ENCODE measurements at regions of chr22 and their contacts with region 1.

Region 1: DNA sequence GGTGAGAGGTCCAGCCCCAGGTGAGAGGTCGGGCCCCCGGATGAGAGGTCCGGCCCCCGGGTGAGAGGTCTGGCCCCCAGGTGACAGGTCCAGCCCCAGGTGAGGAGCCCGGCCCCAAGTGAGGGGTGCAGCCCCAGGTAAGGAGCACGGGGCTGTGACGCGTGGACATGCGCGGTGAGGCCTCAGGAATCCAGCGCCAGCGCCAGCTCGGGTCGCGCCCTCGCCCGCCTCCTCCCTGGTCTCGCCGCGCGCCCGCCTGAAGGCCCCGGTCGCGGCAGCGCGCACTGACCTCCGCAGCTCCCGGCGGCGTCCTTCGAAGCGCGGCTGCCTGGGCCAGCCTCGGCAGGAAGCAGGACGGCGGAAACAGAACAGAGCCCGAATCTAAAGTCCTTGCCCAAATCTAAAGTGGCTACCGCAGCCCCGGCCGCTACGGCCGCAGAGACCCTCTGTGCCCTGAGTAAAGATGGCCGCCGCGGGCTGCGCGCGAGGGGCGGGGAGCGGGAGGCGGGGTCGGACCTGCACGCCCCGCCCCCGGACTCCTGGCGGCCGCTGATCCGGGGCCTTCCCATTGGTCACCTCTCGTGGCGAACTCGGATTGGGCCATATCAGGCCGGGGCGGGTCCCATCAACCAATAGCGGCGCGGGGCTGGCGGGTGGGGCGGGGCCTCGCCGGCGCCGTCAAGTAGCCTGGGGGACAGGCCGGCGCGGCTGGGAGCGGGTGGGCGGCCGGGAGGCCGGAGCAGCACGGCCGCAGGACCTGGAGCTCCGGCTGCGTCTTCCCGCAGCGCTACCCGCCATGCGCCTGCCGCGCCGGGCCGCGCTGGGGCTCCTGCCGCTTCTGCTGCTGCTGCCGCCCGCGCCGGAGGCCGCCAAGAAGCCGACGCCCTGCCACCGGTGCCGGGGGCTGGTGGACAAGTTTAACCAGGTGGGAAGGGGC is at the starts of genes ALG12 and CRELD2:
- DNase-seq: peak; percentile 96 to 98
- H3K4me3 ChIP-seq: peak within 1 kb of the TSS; percentile 77
- H3K4me3 Mint-ChIP-seq: peak within 1 kb of the TSS; percentile 71
- H3K27ac Mint-ChIP-seq: peak within 1 kb of the TSS; percentile 71
- H3K4me1 ChIP-seq: peaks cover 10% of the 10 kb centered on the region; the same call in 1 of the 2 replicates
- H3K4me1 Mint-ChIP-seq: no peaks in the 10 kb centered on the region
- H3K27me3 ChIP-seq: no peaks in the 10 kb centered on the region
- H3K27me3 Mint-ChIP-seq: no peaks in the 10 kb centered on the region
- CTCF ChIP-seq: no peak
- total RNA-seq, gene ALG12: 31.6 and 35.7 TPM in 2 replicates
- total RNA-seq, gene CRELD2: 38.1 and 43.3 TPM in 2 replicates

Region 2: DNA sequence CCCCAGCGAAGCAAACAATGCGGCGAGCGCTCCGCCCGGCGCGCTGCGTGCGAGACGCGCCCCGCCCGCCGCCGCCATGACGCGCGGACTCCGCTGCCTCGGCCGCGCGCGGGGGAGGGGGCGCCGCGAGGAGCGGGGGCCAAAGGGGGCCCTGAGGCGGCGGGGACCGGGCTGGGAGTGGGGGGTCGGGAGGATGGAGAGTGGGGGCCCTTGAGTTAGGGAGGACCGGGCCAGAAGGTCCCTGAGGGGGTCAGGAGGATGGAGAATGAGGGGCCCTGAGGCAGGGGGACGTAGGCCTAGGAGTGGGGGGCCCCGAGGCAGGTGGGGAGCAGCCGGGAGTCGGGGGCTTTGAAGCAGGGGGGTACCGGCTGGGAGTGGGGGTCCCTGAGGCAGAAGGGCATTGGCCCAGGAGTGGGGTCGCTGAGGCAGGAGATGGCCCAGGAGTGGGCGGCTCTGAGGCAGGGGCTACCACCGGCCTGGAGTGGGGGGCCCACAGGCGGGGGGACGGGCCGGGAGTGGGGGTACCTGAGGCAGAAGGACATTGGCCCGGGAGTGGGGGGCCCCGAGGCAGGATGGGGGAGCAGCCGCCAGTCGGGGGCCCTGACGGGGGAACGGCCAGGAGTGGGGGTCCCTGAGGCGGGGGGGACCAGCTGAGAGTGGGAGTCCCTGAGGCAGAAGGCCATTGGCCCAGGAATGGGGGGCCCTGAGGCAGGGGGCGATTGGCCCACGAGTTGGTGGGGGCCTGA is 90.2 kb before region 1 on chr22 and contains the start of gene BRD1:
- CTCF ChIA-PET with region 1: no interaction called
- POLR2A ChIA-PET with region 1: no interaction called
- intact Hi-C with region 1: no loop called
- DNase-seq: peak in 1 of 2 experiments; percentile 68
- H3K4me3 ChIP-seq: peak within 1 kb of the TSS; percentile 65
- H3K4me3 Mint-ChIP-seq: peak within 1 kb of the TSS; percentile 77
- H3K27ac Mint-ChIP-seq: peak within 1 kb of the TSS; percentile 70
- H3K4me1 ChIP-seq: peaks cover 13% of the 10 kb centered on the region
- H3K4me1 Mint-ChIP-seq: peaks cover 6% of the 10 kb centered on the region
- H3K27me3 ChIP-seq: no peaks in the 10 kb centered on the region
- H3K27me3 Mint-ChIP-seq: no peaks in the 10 kb centered on the region
- CTCF ChIP-seq: no peak
- total RNA-seq, gene BRD1: 46.9 and 48.3 TPM in 2 replicates

Region 3: DNA sequence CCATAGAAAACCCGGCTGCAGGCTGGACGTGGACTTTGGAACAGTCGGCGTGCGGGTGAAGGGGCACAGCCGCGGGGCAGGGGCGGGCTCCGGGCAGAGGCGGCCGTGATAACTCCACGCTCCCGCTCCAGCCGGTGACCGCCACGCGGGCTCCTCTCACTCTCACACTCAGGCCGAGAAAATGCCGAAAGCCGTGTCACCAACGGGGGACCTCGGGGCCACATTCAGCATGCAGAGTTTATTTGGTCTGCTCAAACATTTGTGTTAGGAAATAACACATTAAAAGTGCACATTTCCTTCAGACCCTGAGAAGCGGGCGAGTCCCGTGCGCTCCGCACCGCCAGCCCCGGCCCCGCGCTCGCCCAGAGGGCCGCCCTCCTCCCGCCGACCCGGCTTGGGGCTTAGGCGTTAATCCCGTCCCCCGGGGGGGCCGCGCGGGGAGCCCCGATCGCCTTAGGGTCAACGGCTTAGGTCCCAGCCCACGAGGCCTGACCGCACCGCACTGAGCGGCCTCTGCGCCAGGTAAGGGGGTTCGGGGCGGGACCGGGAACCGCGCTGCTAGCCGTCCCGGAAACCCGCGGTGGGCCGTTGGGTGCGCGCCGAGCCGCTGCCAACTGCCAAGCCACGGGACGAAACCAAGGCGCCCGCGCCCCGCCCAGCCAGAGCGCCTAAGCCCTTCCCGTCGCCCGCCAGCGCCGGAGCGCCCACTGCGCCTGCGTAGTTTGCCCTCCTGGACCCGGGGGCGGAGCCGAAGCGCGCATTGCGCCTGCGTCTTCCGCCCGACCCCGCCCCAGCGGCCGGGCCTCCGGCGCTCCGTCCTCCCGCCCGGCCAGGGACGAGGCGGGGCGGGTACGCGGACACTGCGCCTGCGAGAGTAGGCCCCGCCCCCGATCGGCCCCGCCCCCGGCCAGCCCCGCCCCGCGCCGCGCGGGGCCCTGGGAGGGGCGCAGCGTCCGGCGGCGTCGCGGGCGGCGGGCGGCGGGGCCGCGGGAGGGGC is 65.0 kb before region 1 on chr22 and contains the start of gene ZBED4:
- CTCF ChIA-PET with region 1: no interaction called
- POLR2A ChIA-PET with region 1: no interaction called
- intact Hi-C with region 1: loop called (anchors 2 kb)
- DNase-seq: peak; percentile 95 to 99
- H3K4me3 ChIP-seq: peak within 1 kb of the TSS; percentile 94
- H3K4me3 Mint-ChIP-seq: peak within 1 kb of the TSS; percentile 90
- H3K27ac Mint-ChIP-seq: peak within 1 kb of the TSS; percentile 90
- H3K4me1 ChIP-seq: peaks cover 22% of the 10 kb centered on the region
- H3K4me1 Mint-ChIP-seq: peaks cover 19% of the 10 kb centered on the region
- H3K27me3 ChIP-seq: no peaks in the 10 kb centered on the region; the same call in 1 of the 2 replicates
- H3K27me3 Mint-ChIP-seq: no peaks in the 10 kb centered on the region
- CTCF ChIP-seq: no peak
- total RNA-seq, gene ZBED4: 17.3 TPM in 2 replicates

Region 4: DNA sequence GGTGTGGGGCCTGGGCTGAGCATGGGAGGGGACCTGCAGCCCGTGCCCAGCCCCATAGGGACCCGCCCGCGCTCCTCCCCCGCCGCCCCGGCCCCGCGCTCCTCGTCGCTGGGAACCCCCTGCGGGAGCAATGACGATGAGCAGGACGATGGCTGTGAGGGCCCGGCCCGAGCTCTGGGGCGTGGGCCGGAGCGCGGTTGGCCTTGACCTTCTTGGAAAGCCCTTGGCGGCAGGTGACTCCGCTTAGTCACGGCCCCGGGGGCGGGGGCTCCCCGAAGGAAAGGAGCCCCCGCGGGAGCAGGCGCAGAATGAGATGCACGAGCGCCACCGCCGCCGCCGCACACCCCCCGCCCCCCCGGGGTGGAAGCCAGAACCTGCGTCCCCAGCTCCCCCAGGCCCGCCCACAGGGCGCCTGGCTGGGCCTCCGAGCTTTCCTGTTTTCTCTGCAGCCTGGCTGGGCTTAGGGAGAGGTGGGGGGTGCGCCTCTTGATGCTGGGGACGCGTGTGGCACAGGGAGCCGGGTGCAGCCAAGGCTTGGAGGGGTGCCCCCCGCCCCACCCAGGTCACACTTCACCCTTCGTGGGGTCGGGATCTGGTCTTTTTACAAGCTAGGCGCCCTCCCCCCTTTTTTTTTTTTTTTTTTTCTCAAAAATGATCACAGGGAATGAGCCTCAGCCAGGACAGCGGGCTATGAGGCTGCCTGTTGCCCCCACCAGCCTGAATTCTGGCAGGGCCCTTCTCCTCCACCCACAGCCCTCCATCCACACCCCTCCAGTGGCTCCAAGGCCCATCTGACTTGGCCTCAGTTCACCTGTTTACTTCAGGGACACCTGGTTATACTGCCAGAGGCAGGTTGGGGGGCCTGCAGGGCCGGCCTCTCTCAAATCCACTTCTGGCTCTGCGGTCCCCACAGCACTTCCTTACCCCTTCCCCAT is 18.0 kb after region 1 on chr22:
- CTCF ChIA-PET with region 1: no interaction called
- POLR2A ChIA-PET with region 1: no interaction called
- intact Hi-C with region 1: no loop called
- DNase-seq: peak; percentile 40 to 58
- H3K4me3 ChIP-seq: peak overlapping the region; percentile 23
- H3K4me3 Mint-ChIP-seq: no peak overlapping the region
- H3K27ac Mint-ChIP-seq: no peak overlapping the region
- H3K4me1 ChIP-seq: peaks cover 6% of the 10 kb centered on the region
- H3K4me1 Mint-ChIP-seq: no peaks in the 10 kb centered on the region
- H3K27me3 ChIP-seq: no peaks in the 10 kb centered on the region
- H3K27me3 Mint-ChIP-seq: no peaks in the 10 kb centered on the region
- CTCF ChIP-seq: no peak

Measured in Caco-2 (cell line).